ENCODE measurements at regions of chr4 and their contacts with region 1.

Region 1: GRCh38 chr4:3136453-3136852 is 62.0 kb downstream of the HTT start:
- DNase-seq: no peak
- H3K4me3 Mint-ChIP-seq: no peak overlapping the region
- H3K27ac Mint-ChIP-seq: no peak overlapping the region
- H3K4me1 Mint-ChIP-seq: no peaks in the 10 kb centered on the region
- H3K27me3 Mint-ChIP-seq: no peaks in the 10 kb centered on the region

Region 2: DNA sequence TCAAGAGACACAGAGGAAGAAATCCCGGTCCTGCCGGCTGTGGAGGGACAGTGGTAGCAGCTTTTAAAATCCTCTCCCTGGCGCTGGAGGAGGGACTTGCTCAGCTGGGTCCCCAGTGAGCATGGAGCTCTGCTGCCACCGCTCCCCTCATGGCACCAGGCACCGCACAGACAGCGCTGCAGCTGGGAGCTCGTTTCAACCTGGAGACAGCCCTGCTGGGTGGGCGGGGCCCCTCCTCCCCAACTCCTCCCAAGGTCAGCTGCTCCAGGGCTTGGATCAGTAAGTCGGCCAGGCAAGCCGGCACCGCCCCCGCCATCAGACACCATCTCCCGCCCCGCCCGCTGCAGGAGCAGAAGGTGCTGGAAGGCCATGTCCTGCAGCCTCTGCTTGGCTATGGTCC is 734.4 kb before region 1 on chr4:
- CTCF ChIA-PET with region 1: no interaction called
- intact Hi-C with region 1: no loop called
- DNase-seq: peak; percentile 48
- H3K4me3 Mint-ChIP-seq: peak overlapping the region; percentile 55
- H3K27ac Mint-ChIP-seq: no peak overlapping the region
- H3K4me1 Mint-ChIP-seq: peaks cover 17% of the 10 kb centered on the region
- H3K27me3 Mint-ChIP-seq: no peaks in the 10 kb centered on the region

Region 3: GRCh38 chr4:3122081-3122563 is 14.3 kb before region 1 on chr4:
- CTCF ChIA-PET with region 1: interaction called, 10 read pairs
- intact Hi-C with region 1: no loop called
- DNase-seq: peak; percentile 18
- H3K4me3 Mint-ChIP-seq: no peak overlapping the region
- H3K27ac Mint-ChIP-seq: peak overlapping the region; percentile 39
- H3K4me1 Mint-ChIP-seq: peaks cover 24% of the 10 kb centered on the region
- H3K27me3 Mint-ChIP-seq: no peaks in the 10 kb centered on the region